ENCODE measurements at regions of chr15 and their contacts with region 1.

Region 1: DNA sequence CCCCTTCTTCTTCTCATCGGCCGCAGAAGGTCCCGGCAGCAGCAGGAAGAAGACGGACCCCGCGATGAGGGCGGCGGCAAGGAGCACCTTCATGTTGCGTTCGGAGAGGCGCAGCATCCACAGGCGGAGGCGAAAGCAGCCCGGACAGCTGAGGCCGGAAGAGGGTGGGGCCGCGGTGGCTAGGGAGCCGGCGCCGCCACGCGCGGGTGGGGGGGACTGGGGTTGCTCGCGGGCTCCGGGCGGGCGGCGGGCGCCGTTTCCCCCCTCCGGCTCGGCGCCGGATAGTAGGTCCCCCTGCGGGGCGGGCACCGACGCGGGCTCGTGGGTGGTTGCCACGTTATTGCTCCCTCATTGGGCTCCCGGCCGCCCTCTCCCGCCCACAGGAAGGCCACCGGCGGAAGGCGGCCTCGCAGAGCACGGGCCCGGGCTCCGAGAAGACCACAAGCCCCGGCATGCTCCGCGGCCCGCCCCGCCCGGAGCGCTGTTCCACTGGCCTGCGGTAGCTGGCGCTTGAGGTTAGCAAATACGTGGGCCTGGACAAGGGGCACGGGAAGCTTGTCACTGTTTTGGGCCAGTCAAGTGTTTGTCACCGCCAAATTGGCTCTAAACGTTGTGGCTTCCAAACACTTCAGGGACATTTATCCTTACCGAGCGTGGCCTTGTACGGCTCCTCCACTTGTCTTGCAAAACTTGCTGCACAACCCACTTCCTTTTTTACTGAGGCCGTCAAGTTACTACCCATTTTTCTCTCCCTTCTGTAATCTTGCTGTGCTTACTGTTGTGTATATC is at the start of gene PPIB:
- DNase-seq: peak; percentile 95
- ATAC-seq: peak; percentile 96
- H3K4me3 Mint-ChIP-seq: peak within 1 kb of the TSS; percentile 84
- H3K27ac Mint-ChIP-seq: peak within 1 kb of the TSS; percentile 92
- H3K4me1 Mint-ChIP-seq: peaks cover 33% of the 10 kb centered on the region
- H3K27me3 Mint-ChIP-seq: no peaks in the 10 kb centered on the region
- CTCF ChIP-seq: no peak
- total RNA-seq, gene PPIB: 469 to 495 TPM (median 485 TPM) in 3 replicates

Region 2: GRCh38 chr15:64122936-64123351 is 40.1 kb before region 1 on chr15:
- CTCF ChIA-PET with region 1: no interaction called
- POLR2A ChIA-PET with region 1: no interaction called
- DNase-seq: no peak
- ATAC-seq: no peak
- H3K4me3 Mint-ChIP-seq: no peak overlapping the region
- H3K27ac Mint-ChIP-seq: no peak overlapping the region
- H3K4me1 Mint-ChIP-seq: no peaks in the 10 kb centered on the region
- H3K27me3 Mint-ChIP-seq: no peaks in the 10 kb centered on the region
- CTCF ChIP-seq: no peak

Region 3: GRCh38 chr15:64180235-64180837 is 17.3 kb after region 1 on chr15:
- CTCF ChIA-PET with region 1: no interaction called
- POLR2A ChIA-PET with region 1: no interaction called
- DNase-seq: no peak
- ATAC-seq: peak; percentile 87
- H3K4me3 Mint-ChIP-seq: no peak overlapping the region
- H3K27ac Mint-ChIP-seq: no peak overlapping the region
- H3K4me1 Mint-ChIP-seq: no peaks in the 10 kb centered on the region
- H3K27me3 Mint-ChIP-seq: no peaks in the 10 kb centered on the region
- CTCF ChIP-seq: no peak

Region 4: DNA sequence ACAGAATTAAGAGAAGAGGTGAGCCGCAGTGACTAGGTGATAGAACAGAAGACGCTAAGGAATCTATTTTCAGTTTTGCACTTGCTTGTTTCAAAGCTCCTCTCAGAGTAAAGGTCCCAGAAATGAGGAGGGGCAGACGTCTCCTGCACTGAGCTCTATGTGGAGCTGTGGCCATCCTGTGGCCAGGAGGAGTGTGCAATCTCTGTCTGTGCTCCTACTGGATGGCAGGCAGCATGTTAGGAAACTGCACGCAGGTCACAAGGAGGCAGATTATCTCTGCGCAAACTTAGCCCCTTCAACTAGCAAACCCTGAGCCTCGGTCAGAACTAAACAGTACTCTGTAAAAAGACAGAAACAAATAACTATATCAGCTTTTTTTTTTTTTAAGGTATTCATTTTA is 30.9 kb after region 1 on chr15:
- CTCF ChIA-PET with region 1: interaction called, 12 read pairs
- POLR2A ChIA-PET with region 1: no interaction called
- DNase-seq: peak; percentile 17
- ATAC-seq: peak; percentile 78
- H3K4me3 Mint-ChIP-seq: no peak overlapping the region
- H3K27ac Mint-ChIP-seq: no peak overlapping the region
- H3K4me1 Mint-ChIP-seq: no peaks in the 10 kb centered on the region
- H3K27me3 Mint-ChIP-seq: no peaks in the 10 kb centered on the region
- CTCF ChIP-seq: no peak

Region 5: GRCh38 chr15:64232400-64232799 is 69.3 kb after region 1 on chr15:
- CTCF ChIA-PET with region 1: no interaction called
- POLR2A ChIA-PET with region 1: no interaction called
- DNase-seq: no peak
- ATAC-seq: no peak
- H3K4me3 Mint-ChIP-seq: no peak overlapping the region
- H3K27ac Mint-ChIP-seq: peak overlapping the region; percentile 5; the same call in 1 of the 2 replicates
- H3K4me1 Mint-ChIP-seq: peaks cover 7% of the 10 kb centered on the region
- H3K27me3 Mint-ChIP-seq: no peaks in the 10 kb centered on the region
- CTCF ChIP-seq: no peak

Region 6: DNA sequence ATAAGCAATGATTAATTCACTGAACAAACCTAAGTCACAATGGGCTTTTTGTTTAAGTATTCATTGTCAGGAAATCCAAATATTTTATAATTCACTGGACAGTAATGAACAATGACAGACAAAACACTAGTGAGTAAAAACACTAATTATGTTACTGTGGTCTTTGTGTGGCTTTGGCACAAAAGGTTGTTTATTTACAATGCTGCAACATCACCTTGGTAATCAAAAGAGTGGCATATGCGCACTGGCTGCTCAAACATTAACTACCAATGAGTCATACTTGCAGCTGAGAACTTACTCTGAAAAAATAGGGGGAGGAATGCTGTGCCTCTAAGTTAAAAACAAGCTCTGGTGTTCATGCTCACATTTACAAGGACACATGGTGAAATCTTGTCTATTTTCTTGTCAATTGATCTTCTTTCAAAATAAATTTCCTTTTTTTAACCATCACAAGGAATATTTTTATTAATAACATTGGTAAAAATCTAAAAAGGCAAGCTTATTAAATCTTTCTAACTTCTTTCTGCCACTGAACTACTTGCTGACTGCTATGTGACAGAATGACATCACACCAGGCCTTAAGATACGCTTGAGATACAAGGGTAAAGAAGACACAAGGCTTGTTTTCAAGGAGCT is 85.0 kb after region 1 on chr15:
- CTCF ChIA-PET with region 1: no interaction called
- POLR2A ChIA-PET with region 1: no interaction called
- DNase-seq: no peak
- ATAC-seq: peak; percentile 71
- H3K4me3 Mint-ChIP-seq: no peak overlapping the region
- H3K27ac Mint-ChIP-seq: peak overlapping the region; percentile 89
- H3K4me1 Mint-ChIP-seq: peaks cover 20% of the 10 kb centered on the region
- H3K27me3 Mint-ChIP-seq: no peaks in the 10 kb centered on the region
- CTCF ChIP-seq: no peak